ENCODE measurements at regions of chr6 and their contacts with region 1.

Region 1: GRCh38 chr6:118894425-118895260 is 691 bp downstream of the ASF1A start:
- DNase-seq: peak; percentile 67
- H3K4me3 ChIP-seq: peak overlapping the region; percentile 90
- H3K27ac ChIP-seq: peak overlapping the region; percentile 97
- H3K4me1 ChIP-seq: no peaks in the 10 kb centered on the region
- H3K27me3 ChIP-seq: no peaks in the 10 kb centered on the region
- CTCF ChIP-seq: no peak

Region 2: DNA sequence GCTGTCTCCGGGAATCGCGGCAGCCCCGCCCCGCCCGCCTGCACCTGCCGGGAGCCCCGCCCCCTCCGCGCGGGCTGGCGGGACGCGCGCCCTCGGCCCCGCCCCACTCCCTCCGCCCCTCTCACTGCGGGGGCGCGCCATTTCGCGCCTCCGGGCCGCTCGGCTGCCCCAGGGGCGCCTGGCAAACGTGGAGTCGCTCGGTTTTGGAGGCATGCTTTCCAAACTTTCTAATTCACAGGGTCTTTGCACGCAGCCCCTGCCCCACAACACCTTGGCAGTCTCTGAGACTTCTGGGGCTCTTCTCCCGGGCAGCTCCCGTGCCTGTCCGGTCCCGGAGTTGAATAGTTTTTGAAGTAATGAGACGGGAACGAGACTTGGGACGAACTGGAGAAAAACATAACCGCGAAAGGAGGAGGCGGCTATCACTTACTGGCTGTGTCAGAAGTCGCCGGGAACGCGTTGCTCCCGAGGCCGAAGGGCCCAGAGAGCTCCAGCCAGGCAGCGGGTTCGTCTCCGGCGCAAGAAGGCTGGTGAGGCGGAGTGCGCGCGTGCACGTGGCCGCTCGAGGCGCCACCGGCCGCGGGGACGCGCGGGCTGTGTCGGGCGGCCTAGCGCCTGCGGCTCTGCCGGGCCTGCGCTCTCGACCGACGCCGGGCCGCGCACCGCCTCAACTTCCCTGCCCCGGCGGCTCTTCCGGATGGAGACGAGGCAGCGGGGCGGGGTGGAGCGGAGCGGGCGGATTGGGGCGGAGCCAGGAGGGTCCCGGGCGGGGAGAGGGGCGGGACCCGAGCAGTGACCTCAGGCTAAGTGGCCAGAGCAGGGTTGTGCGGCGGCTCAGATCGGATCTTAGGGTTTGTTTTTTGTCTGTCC is 40.1 kb after region 1 on chr6 and contains the start of gene MCM9:
- intact Hi-C with region 1: loop called (anchors 5 kb)
- DNase-seq: peak; percentile 94
- H3K4me3 ChIP-seq: peak within 1 kb of the TSS; percentile 77
- H3K27ac ChIP-seq: peak within 1 kb of the TSS; percentile 98
- H3K4me1 ChIP-seq: no peaks in the 10 kb centered on the region
- H3K27me3 ChIP-seq: no peaks in the 10 kb centered on the region
- CTCF ChIP-seq: no peak
- total RNA-seq, gene MCM9: 14.3 to 18.5 TPM